HAP-1 (cell line): ENCODE measurements at regions of chr16 and their contacts with region 1.

Region 1: DNA sequence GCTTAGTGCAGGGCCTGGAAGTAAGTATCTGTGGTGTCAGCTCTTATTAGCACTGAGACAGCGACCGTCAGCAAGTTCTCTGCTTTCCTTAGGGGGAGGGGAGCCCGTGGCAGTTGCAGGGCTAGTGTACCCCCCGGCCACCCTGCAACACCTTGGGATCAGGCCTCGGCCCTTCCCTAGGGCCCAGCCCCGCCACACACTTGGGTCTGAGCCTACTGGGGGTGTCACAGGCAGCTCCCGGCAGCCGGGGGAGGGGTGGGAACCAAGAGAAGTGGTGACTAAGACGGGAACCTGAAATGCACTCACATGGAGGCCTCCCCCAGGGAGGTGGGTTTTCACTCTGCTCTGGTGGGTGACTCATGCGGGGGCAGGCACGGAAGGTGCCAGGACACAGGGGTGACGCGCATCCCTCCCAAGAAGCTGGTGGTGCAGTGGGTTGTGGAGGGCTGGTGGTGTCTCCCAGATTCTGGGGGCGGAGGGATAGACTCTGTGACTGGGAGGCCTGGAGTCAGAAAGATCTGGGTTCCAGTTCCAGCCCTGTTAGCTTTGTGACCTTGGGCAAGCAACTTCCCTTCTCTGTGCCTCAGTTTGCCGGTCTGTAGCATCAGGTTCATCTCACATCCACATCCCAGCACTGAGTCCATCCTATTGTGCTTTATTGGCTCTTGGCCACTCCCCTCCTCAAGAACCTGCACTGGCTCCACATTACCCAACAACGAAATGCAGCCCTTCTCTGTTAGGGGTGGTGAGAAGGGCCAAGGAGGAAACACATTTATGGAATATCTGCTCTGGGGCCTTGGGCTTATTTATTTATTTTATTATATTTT is 44.5 kb downstream of the LAT start:
- DNase-seq: no peak
- H3K4me3 ChIP-seq: no peak overlapping the region
- H3K4me1 ChIP-seq: no peaks in the 10 kb centered on the region
- H3K27me3 ChIP-seq: no peaks in the 10 kb centered on the region

Region 2: GRCh38 chr16:27515874-27516353 is 1513.5 kb before region 1 on chr16:
- in situ Hi-C with region 1: no loop called
- DNase-seq: peak; percentile 13 to 57
- H3K4me3 ChIP-seq: no peak overlapping the region
- H3K4me1 ChIP-seq: no peaks in the 10 kb centered on the region
- H3K27me3 ChIP-seq: no peaks in the 10 kb centered on the region

Region 3: DNA sequence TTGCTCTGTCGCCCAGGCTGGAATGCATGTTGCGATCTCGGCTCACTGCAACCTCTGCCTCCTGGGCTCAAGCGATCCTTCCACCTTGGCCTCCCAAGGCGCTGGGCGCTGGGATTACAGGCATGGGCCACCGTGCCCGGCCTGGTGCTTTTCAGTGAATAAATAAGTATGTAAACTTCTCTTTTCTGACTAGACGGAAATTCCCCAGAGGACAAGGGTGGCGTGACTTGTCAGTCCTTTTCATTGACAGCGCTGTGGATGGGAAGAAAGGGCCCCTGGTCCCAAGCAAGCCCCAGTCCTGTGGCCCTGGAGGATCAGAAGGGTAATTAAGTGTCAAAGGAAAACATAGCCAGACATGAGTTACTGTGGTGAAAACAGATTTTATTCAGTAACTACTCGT is 624.1 kb after region 1 on chr16:
- in situ Hi-C with region 1: loop called (anchors 10 kb)
- DNase-seq: peak in 1 of 2 experiments; percentile 43
- H3K4me3 ChIP-seq: no peak overlapping the region
- H3K4me1 ChIP-seq: no peaks in the 10 kb centered on the region
- H3K27me3 ChIP-seq: no peaks in the 10 kb centered on the region